Activated naive CD4-positive, alpha-beta T cell treated with anti-CD3 and anti-CD28 coated beads for 36 hours (primary cell): ENCODE measurements at regions of chr1 and their contacts with region 1.

Region 1: GRCh38 chr1:160997323-160998038 is 23.5 kb downstream of the F11R start:
- DNase-seq: peak; percentile 77
- H3K4me3 Mint-ChIP-seq: no peak overlapping the region
- H3K27ac Mint-ChIP-seq: peak overlapping the region; percentile 1
- H3K4me1 Mint-ChIP-seq: peaks cover 6% of the 10 kb centered on the region
- H3K27me3 Mint-ChIP-seq: no peaks in the 10 kb centered on the region

Region 2: DNA sequence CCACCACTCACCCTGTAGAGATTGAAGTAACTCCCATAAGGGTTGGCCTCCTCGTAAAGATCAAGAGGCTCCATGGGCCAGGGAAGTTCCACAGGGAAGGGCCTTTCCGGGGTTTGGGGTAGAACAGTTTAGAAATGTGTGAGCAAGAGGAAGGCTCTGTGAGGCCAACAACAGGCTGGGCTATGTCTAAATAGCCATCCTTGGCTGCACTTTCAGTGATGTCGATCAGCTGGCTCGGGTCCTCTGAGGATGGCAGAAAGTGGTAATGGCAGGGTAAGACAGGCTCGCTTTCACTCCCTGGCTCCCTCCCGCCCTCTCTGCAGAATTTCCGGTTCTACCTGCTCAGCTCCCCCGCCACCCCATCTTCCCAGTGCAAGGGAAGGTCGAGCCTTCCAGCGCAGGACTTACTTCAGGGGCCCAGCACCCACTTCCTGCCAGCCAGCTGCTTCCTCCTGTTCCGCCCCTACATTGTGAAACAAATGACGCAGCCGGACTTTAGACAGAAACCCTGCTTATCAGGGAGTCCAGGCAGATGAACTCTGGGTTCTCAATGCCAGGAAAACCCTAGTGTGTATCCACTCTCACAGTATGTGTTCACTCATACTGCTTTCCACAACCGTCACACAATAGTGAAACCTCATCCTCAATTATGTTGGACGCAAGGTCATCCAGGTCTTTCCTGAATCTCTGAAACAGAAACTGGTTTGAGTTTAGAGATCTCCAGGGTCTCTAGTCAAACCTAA is 16.2 kb after region 1 on chr1:
- CTCF ChIA-PET with region 1: interaction called, 35 read pairs
- intact Hi-C with region 1: no loop called
- DNase-seq: peak; percentile 87
- H3K4me3 Mint-ChIP-seq: peak overlapping the region; percentile 68
- H3K27ac Mint-ChIP-seq: peak overlapping the region; percentile 89
- H3K4me1 Mint-ChIP-seq: peaks cover 32% of the 10 kb centered on the region
- H3K27me3 Mint-ChIP-seq: no peaks in the 10 kb centered on the region

Region 3: GRCh38 chr1:161021165-161021960 is 23.9 kb after region 1 on chr1:
- CTCF ChIA-PET with region 1: interaction called, 11 read pairs
- intact Hi-C with region 1: no loop called
- DNase-seq: peak; percentile 94
- H3K4me3 Mint-ChIP-seq: peak overlapping the region; percentile 92
- H3K27ac Mint-ChIP-seq: peak overlapping the region; percentile 76
- H3K4me1 Mint-ChIP-seq: peaks cover 35% of the 10 kb centered on the region
- H3K27me3 Mint-ChIP-seq: no peaks in the 10 kb centered on the region

Region 4: GRCh38 chr1:161038523-161039153 is 41.2 kb after region 1 on chr1 and contains the start of gene TSTD1:
- CTCF ChIA-PET with region 1: interaction called, 12 read pairs
- intact Hi-C with region 1: no loop called
- DNase-seq: peak; percentile 92
- H3K4me3 Mint-ChIP-seq: peak within 1 kb of the TSS; percentile 88
- H3K27ac Mint-ChIP-seq: peak within 1 kb of the TSS; percentile 77
- H3K4me1 Mint-ChIP-seq: peaks cover 36% of the 10 kb centered on the region
- H3K27me3 Mint-ChIP-seq: no peaks in the 10 kb centered on the region
- total RNA-seq, gene TSTD1: 50.3 to 51.5 TPM

Region 5: GRCh38 chr1:161092621-161093028 is 95.1 kb after region 1 on chr1:
- CTCF ChIA-PET with region 1: interaction called, 99 read pairs
- intact Hi-C with region 1: loop called (anchors 1 kb)
- DNase-seq: peak; percentile 80
- H3K4me3 Mint-ChIP-seq: no peak overlapping the region
- H3K27ac Mint-ChIP-seq: no peak overlapping the region
- H3K4me1 Mint-ChIP-seq: peaks cover 61% of the 10 kb centered on the region
- H3K27me3 Mint-ChIP-seq: no peaks in the 10 kb centered on the region

Region 6: DNA sequence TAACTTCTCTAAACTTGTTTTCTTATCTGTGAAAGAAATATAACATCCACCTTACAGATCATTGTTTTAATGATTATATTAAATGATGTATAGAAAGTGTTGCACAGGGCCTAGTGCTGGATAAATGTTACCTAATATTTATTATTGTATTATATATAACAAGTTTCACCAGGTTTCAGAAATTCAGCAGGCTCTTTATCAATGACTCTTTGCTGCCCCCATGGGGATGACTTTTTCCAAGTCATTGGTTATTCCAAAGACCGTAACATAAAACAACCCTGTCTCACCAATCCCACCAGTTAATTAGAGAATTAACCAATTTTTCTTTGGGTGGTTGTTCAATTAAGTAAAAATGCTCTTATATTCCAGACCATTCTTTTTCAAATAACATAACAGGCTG is 142.3 kb after region 1 on chr1:
- CTCF ChIA-PET with region 1: interaction called, 45 read pairs
- intact Hi-C with region 1: loop called (anchors 1 kb)
- DNase-seq: peak; percentile 71
- H3K4me3 Mint-ChIP-seq: no peak overlapping the region
- H3K27ac Mint-ChIP-seq: no peak overlapping the region
- H3K4me1 Mint-ChIP-seq: peaks cover 4% of the 10 kb centered on the region
- H3K27me3 Mint-ChIP-seq: no peaks in the 10 kb centered on the region